ENCODE measurements at regions of chr7 and their contacts with region 1.

Region 1: GRCh38 chr7:100563809-100564400 is 9.8 kb downstream of the SAP25 start:
- DNase-seq: peak; percentile 83 to 90
- ATAC-seq: peak; percentile 75 to 80 (median 77)
- H3K4me3 ChIP-seq: no peak overlapping the region
- H3K4me3 Mint-ChIP-seq: no peak overlapping the region
- H3K27ac ChIP-seq: no peak overlapping the region
- H3K27ac Mint-ChIP-seq: peak overlapping the region in 1 of 2 donors; percentile 56
- H3K4me1 ChIP-seq: peaks cover 33% of the 10 kb centered on the region
- H3K4me1 Mint-ChIP-seq: peaks cover 4 to 26% of the 10 kb centered on the region in 2 donors
- H3K27me3 ChIP-seq: no peaks in the 10 kb centered on the region
- H3K27me3 Mint-ChIP-seq: no peaks in the 10 kb centered on the region
- CTCF ChIP-seq: peak; percentile 97

Region 2: DNA sequence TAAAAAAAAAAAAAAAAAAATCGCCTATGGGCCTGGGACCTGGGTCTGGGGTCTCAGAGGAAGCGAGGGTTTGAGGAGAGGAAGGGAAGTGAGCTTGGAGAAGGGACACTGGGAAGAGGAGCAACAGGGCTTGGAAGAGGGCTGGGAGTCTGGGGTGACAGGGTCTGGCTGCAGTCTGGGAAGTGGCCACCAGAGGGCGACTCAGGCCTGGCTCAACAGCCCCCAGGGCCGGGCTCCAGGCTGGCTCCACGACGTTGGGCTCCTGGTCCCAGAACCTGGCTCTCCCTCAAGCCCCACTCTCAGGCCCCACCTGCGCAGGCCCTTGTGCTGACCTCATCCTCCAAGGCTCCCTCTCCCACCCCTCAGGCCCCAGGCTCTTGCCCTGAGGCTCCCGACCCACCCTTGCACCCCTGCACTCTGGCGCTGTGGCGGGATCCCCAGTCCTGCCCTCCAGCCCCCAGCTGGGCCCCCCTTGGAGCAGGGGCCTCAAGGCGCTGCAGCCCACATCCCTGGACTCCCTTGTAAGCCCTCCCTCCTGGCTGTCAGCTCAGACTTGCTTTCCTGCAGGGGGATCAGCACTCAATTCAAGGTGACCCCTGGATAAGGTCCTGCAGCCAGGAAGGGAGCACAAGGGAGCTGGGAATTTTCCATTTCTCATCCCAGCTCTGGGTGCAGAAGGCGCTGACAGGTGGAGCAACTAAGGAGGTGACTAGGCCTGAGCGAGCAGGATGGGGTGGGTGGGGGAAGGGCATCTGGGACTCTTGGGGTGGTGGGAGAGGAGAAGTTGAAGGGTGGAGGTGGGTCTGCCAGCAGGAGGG is 94.5 kb before region 1 on chr7:
- intact Hi-C with region 1: loop called (anchors 1 kb)
- DNase-seq: peak; percentile 84 to 91
- ATAC-seq: peak; percentile 91 to 98 (median 94)
- H3K4me3 ChIP-seq: no peak overlapping the region
- H3K4me3 Mint-ChIP-seq: no peak overlapping the region
- H3K27ac ChIP-seq: no peak overlapping the region
- H3K27ac Mint-ChIP-seq: peak overlapping the region in 1 of 2 donors; percentile 18
- H3K4me1 ChIP-seq: peaks cover 26% of the 10 kb centered on the region
- H3K4me1 Mint-ChIP-seq: peaks cover 0 to 34% of the 10 kb centered on the region in 2 donors
- H3K27me3 ChIP-seq: no peaks in the 10 kb centered on the region
- H3K27me3 Mint-ChIP-seq: no peaks in the 10 kb centered on the region
- CTCF ChIP-seq: peak; percentile 86

Region 3: GRCh38 chr7:100545360-100546128 is 18.4 kb before region 1 on chr7:
- intact Hi-C with region 1: loop called (anchors 2 kb)
- DNase-seq: peak in 1 of 2 donors; percentile 59
- ATAC-seq: peak; percentile 28 to 72 (median 55)
- H3K4me3 ChIP-seq: no peak overlapping the region
- H3K4me3 Mint-ChIP-seq: peak overlapping the region; percentile 88
- H3K27ac ChIP-seq: peak overlapping the region; percentile 76
- H3K27ac Mint-ChIP-seq: peak overlapping the region; percentile 94 to 95
- H3K4me1 ChIP-seq: peaks cover 80% of the 10 kb centered on the region
- H3K4me1 Mint-ChIP-seq: peaks cover 80 to 85% of the 10 kb centered on the region in 2 donors
- H3K27me3 ChIP-seq: no peaks in the 10 kb centered on the region
- H3K27me3 Mint-ChIP-seq: no peaks in the 10 kb centered on the region
- CTCF ChIP-seq: no peak

Region 4: GRCh38 chr7:100691676-100692577 is 128.0 kb after region 1 on chr7:
- intact Hi-C with region 1: loop called (anchors 1 kb)
- DNase-seq: peak; percentile 73 to 90
- ATAC-seq: peak; percentile 64 to 75 (median 65)
- H3K4me3 ChIP-seq: no peak overlapping the region
- H3K4me3 Mint-ChIP-seq: peak overlapping the region; percentile 96
- H3K27ac ChIP-seq: no peak overlapping the region
- H3K27ac Mint-ChIP-seq: peak overlapping the region; percentile 84 to 94
- H3K4me1 ChIP-seq: peaks cover 46% of the 10 kb centered on the region
- H3K4me1 Mint-ChIP-seq: peaks cover 25 to 32% of the 10 kb centered on the region in 2 donors
- H3K27me3 ChIP-seq: no peaks in the 10 kb centered on the region
- H3K27me3 Mint-ChIP-seq: no peaks in the 10 kb centered on the region
- CTCF ChIP-seq: peak; percentile 82

Region 5: DNA sequence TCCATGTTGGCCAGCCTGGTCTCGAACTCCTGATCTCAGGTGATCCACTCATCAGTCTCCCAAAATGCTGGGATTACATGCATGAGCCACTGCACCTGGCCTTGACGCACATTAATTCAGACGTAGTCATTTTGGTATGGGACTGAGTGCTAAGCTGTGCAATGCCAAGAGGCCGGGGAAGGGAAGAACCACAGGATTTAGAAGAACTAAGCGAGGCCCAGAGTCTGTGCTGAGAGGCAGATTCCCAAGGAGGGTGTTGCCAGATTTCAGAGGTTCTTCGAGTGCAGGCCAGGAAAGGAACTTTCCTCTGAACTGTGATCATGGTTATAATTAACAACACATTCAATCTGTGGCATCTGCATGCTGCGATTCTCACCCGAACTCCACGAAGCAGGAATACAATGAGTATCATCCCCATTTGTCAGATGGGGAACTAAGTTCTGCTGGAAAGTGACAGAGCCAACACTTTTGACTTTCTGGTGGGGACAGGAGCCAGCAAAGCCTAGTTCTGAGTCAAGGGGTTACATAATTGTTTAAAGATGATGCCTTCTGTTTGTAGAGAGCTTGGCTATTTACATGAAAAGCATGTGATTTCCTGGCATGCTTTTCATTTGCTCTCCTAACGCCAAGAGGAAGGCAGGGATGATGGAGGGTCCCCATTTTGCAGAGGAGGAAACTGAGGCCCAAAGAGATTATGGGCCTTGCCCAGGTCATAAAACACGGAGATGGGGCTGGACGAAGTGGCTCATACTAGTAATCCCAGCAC is 163.3 kb after region 1 on chr7:
- intact Hi-C with region 1: loop called (anchors 1 kb)
- DNase-seq: no peak
- ATAC-seq: no peak
- H3K4me3 ChIP-seq: no peak overlapping the region
- H3K4me3 Mint-ChIP-seq: no peak overlapping the region
- H3K27ac ChIP-seq: no peak overlapping the region
- H3K27ac Mint-ChIP-seq: no peak overlapping the region
- H3K4me1 ChIP-seq: peaks cover 5% of the 10 kb centered on the region
- H3K4me1 Mint-ChIP-seq: peaks cover 6 to 7% of the 10 kb centered on the region in 2 donors
- H3K27me3 ChIP-seq: no peaks in the 10 kb centered on the region
- H3K27me3 Mint-ChIP-seq: peaks cover 14% of the 10 kb centered on the region in 2 donors
- CTCF ChIP-seq: no peak